Cardiac septum (tissue), 1 donor: ENCODE measurements at regions of chr3 and their contacts with region 1.

Region 1: DNA sequence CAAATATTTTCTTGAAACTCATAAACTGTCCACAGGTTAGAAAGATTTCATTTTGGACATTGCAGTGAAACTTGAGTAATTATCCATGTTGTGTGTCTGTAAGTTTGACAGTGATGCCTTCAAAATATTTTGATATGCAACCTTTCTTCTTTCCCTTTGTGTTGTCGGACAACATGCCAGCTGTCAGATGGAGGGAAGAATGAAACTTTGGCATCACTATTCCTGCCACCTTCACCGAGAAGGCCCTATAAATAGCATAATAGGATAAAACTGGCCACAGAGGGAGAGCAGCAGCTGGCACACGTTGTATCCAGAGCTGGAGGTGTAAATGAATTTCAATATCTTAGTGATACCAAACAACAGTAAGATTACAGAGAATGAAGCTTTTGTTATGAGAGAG is 436.7 kb upstream of the CFAP20DC start:
- DNase-seq: no peak

Region 2: DNA sequence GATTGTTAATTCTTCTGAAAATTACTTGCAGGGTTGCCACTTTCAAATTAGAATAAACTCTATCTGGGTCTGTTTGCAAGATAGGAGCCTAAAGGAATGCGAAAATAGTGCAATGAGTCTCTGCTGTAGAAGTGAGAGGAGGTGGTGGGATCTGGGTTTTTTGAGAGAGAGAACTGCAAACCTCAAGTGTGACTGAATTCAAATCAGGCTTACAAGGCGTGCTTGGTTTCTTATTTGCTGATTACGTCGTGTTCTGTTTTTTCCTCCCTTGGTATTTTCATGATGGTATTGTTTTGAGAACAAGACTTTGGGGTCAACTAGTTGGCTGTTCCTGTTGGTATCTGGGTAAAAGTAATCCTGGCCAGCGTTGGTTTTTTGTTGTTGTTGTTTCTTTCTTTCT is 54.2 kb after region 1 on chr3:
- intact Hi-C with region 1: loop called (anchors 5 kb)
- DNase-seq: no peak